Caco-2 (cell line): ENCODE measurements at regions of chr3 and their contacts with region 1.

Region 1: GRCh38 chr3:134212906-134213665 is 37.6 kb downstream of the RYK start:
- DNase-seq: peak; percentile 82 to 92
- H3K4me3 ChIP-seq: no peak overlapping the region
- H3K4me3 Mint-ChIP-seq: no peak overlapping the region
- H3K27ac Mint-ChIP-seq: no peak overlapping the region
- H3K4me1 ChIP-seq: no peaks in the 10 kb centered on the region
- H3K4me1 Mint-ChIP-seq: peaks cover 20% of the 10 kb centered on the region
- H3K27me3 ChIP-seq: no peaks in the 10 kb centered on the region
- H3K27me3 Mint-ChIP-seq: no peaks in the 10 kb centered on the region
- CTCF ChIP-seq: peak; percentile 93 to 94

Region 2: DNA sequence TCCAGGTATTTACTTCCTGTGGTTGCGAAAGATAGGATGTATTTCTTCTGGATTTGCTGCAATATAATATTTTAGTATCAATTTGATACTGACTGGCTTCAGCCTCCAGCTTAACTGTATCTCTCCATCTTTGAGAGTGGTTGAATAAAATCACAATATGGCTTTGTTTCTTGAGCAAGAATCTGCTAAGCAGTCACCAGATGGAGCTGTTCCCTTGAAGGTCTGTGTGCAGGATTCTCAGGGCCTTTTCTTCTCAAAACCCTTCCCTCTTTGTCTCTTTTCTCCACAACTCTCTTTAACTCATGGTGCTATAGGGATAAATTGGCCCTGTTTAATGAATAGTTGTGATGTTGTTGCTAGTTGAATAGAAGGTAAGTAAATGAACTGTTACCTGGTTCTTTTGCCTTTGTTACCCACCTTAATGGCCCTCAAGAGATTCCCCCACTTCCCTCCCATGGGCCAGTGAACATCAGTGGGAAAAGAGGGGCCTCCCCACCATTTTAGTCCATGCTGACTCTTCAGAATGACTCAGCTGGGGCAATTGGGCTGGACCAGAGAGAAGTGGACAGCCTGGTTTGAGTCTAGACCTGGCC is 282.6 kb before region 1 on chr3:
- CTCF ChIA-PET with region 1: interaction called, 3 read pairs
- POLR2A ChIA-PET with region 1: no interaction called
- intact Hi-C with region 1: loop called (anchors 1 kb)
- DNase-seq: peak in 1 of 2 experiments; percentile 49
- H3K4me3 ChIP-seq: no peak overlapping the region
- H3K4me3 Mint-ChIP-seq: no peak overlapping the region
- H3K27ac Mint-ChIP-seq: no peak overlapping the region
- H3K4me1 ChIP-seq: no peaks in the 10 kb centered on the region
- H3K4me1 Mint-ChIP-seq: no peaks in the 10 kb centered on the region
- H3K27me3 ChIP-seq: no peaks in the 10 kb centered on the region
- H3K27me3 Mint-ChIP-seq: no peaks in the 10 kb centered on the region
- CTCF ChIP-seq: peak; percentile 64 to 75

Region 3: DNA sequence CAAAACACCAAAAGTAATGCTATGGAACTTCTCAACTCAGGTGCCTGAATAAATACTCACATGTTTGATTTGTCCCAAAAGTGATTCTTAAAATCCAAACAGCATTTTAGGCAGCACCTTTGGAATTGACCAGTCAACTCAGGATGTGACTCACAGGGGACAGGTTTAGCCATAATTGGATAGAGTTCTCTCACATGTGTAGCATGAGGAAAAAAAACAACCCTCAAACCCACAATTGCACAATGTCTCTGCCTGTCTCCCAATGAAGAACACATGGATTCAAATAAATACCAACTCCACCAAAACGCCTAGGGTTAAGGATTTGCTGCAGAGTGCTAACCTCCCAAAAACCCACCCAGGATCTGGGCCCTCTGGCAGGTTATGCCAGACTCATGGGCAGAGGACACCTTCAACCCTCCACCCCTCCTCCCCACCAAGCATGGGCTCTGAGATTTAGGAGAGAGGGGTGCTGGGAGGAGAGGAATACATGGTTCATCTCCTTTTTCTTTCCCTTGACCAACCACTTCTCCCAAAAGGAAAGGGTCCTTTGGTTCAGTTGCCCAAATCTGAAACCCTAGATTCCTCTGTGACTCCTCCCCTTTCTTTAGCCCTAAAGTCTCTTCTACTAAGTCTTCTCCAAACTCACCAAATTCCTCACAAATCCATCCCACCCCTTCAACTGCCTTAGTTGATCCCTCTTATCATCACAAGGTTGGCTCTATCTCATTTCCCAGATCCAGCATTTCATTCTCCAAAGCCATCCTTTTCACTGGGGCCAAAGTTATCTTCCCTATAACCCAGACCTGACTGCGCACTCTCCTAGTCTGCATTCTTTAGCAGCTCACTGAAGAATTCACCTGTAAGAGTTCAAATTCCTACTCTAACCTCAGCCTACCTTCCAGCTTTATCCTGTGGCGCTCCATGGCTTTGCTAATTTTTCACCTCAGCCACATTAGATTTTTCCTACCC is 29.8 kb after region 1 on chr3:
- CTCF ChIA-PET with region 1: interaction called, 8 read pairs
- POLR2A ChIA-PET with region 1: no interaction called
- intact Hi-C with region 1: loop called (anchors 2 kb)
- DNase-seq: peak; percentile 78
- H3K4me3 ChIP-seq: no peak overlapping the region
- H3K4me3 Mint-ChIP-seq: peak overlapping the region; percentile 52
- H3K27ac Mint-ChIP-seq: peak overlapping the region; percentile 56
- H3K4me1 ChIP-seq: peaks cover 56% of the 10 kb centered on the region
- H3K4me1 Mint-ChIP-seq: peaks cover 61% of the 10 kb centered on the region
- H3K27me3 ChIP-seq: no peaks in the 10 kb centered on the region
- H3K27me3 Mint-ChIP-seq: no peaks in the 10 kb centered on the region
- CTCF ChIP-seq: no peak

Region 4: DNA sequence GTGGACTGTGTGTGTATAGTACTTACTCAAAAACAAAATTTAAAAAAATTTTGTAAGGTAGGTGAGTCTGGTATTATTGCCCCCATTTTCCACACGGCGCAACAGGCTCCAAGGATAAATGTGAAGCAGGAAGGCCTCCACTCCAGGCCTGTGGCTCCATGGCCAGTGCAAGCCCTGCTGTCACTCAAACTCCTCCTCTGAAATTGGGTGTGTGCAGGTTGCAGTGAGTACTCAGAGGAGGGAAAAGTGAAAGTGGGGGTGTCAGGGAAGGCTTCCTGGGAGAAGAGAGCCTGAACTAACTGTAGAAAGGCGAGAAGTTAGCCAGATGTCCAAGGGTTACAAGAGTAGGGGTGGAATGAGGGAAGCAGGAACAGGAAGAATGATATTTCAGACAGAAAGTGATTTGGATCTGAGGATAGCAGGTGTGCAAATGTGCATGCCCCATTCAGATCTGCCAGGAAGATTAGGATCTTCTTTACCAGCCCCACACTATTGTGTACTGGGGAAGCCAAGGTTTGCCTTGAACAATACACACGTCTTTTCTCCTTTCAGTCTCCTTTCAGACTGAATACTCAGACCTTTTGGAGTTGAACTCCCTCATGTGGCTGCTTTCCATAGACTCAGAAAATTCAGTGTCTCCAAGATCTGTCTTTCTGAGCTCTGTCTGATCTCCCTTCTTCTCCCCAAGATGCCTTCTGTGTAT is 86.2 kb after region 1 on chr3:
- CTCF ChIA-PET with region 1: interaction called, 42 read pairs
- POLR2A ChIA-PET with region 1: no interaction called
- intact Hi-C with region 1: loop called (anchors 1 kb)
- DNase-seq: peak in 1 of 2 experiments; percentile 45
- H3K4me3 ChIP-seq: no peak overlapping the region
- H3K4me3 Mint-ChIP-seq: no peak overlapping the region
- H3K27ac Mint-ChIP-seq: no peak overlapping the region
- H3K4me1 ChIP-seq: no peaks in the 10 kb centered on the region
- H3K4me1 Mint-ChIP-seq: peaks cover 6% of the 10 kb centered on the region
- H3K27me3 ChIP-seq: no peaks in the 10 kb centered on the region
- H3K27me3 Mint-ChIP-seq: no peaks in the 10 kb centered on the region
- CTCF ChIP-seq: peak; percentile 39 to 52

Region 5: GRCh38 chr3:134473868-134474546 is 260.9 kb after region 1 on chr3:
- CTCF ChIA-PET with region 1: interaction called, 10 read pairs
- POLR2A ChIA-PET with region 1: no interaction called
- intact Hi-C with region 1: loop called (anchors 1 kb)
- DNase-seq: peak; percentile 77 to 84
- H3K4me3 ChIP-seq: no peak overlapping the region
- H3K4me3 Mint-ChIP-seq: no peak overlapping the region
- H3K27ac Mint-ChIP-seq: no peak overlapping the region
- H3K4me1 ChIP-seq: peaks cover 39% of the 10 kb centered on the region
- H3K4me1 Mint-ChIP-seq: peaks cover 10% of the 10 kb centered on the region
- H3K27me3 ChIP-seq: no peaks in the 10 kb centered on the region
- H3K27me3 Mint-ChIP-seq: no peaks in the 10 kb centered on the region
- CTCF ChIP-seq: peak; percentile 70 to 78

Region 6: DNA sequence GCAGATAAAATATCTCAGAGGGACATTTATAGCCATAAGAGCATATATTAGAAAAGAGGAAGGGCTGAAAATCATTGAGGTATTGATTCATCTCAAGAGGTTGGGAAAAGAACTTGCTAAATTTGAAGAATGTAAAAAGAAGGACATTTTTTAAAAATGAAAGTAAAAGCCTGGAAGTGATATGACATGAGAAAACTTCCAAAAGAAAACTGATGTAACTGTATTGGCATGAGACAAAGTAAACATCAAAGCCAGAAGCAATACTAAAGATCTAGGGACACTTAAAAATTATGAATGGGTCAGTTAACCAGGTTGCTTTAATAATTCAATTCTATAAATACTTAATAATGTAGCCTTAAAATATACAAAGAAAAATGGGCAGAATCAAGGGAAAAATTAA is 304.7 kb after region 1 on chr3:
- CTCF ChIA-PET with region 1: no interaction called
- POLR2A ChIA-PET with region 1: no interaction called
- intact Hi-C with region 1: no loop called
- DNase-seq: no peak
- H3K4me3 ChIP-seq: no peak overlapping the region
- H3K4me3 Mint-ChIP-seq: no peak overlapping the region
- H3K27ac Mint-ChIP-seq: no peak overlapping the region
- H3K4me1 ChIP-seq: peaks cover 8% of the 10 kb centered on the region; the same call in 1 of the 2 replicates
- H3K4me1 Mint-ChIP-seq: peaks cover 13% of the 10 kb centered on the region
- H3K27me3 ChIP-seq: no peaks in the 10 kb centered on the region
- H3K27me3 Mint-ChIP-seq: no peaks in the 10 kb centered on the region
- CTCF ChIP-seq: no peak